Pancreas (tissue), 10 donors: ENCODE measurements at regions of chr15 and their contacts with region 1.

Region 1: DNA sequence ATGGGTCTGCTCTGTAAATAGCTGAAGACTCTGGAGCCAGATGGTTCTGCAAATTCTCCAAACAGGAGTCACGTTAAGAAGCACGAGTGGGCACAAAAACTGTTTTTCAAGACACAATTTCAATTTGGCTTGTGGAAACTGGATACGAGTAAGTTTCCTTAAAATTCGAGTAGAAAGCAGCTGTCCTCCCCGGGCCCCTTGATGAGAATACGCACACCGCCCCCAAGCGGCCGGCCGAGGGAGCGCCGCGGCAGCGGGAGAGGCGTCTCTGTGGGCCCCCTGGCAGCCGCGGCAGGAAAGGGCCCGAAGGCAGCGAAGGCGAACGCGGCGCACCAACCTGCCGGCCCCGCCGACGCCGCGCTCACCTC is 778 bp upstream of the THBS1 start:
- DNase-seq: peak; percentile 83 to 99 (median 92)
- ATAC-seq: peak; percentile 82 to 90 (median 86)
- H3K4me3 ChIP-seq: peak overlapping the region; percentile 26 to 66 (median 43)
- H3K27ac ChIP-seq: peak overlapping the region; percentile 64 to 88 (median 74)
- H3K4me1 ChIP-seq: no peaks in the 10 kb centered on the region
- H3K27me3 ChIP-seq: no peaks in the 10 kb centered on the region
- CTCF ChIP-seq: peak; percentile 96 to 99 (median 98)

Region 2: GRCh38 chr15:38828031-38828532 is 752.0 kb before region 1 on chr15:
- intact Hi-C with region 1: loop called in 1 of 3 experiments (anchors 10 kb)
- DNase-seq: no peak
- ATAC-seq: no peak
- H3K4me3 ChIP-seq: no peak overlapping the region
- H3K27ac ChIP-seq: no peak overlapping the region
- H3K4me1 ChIP-seq: no peaks in the 10 kb centered on the region
- H3K27me3 ChIP-seq: no peaks in the 10 kb centered on the region
- CTCF ChIP-seq: no peak

Region 3: GRCh38 chr15:39171944-39172368 is 408.1 kb before region 1 on chr15:
- intact Hi-C with region 1: loop called in 1 of 3 experiments (anchors 5 kb)
- DNase-seq: peak in 5 of 6 donors; percentile 31 to 63 (median 55)
- ATAC-seq: peak; percentile 83 to 97 (median 94)
- H3K4me3 ChIP-seq: no peak overlapping the region
- H3K27ac ChIP-seq: peak overlapping the region in 1 of 4 donors; percentile 7
- H3K4me1 ChIP-seq: peaks cover 0 to 6% (median 0%) of the 10 kb centered on the region in 3 donors
- H3K27me3 ChIP-seq: no peaks in the 10 kb centered on the region
- CTCF ChIP-seq: peak in 2 of 4 donors; percentile 9 to 10

Region 4: GRCh38 chr15:39358441-39359041 is 221.6 kb before region 1 on chr15:
- intact Hi-C with region 1: no loop called
- DNase-seq: peak in 4 of 6 donors; percentile 27 to 46 (median 38)
- ATAC-seq: peak; percentile 87 to 94 (median 92)
- H3K4me3 ChIP-seq: no peak overlapping the region
- H3K27ac ChIP-seq: peak overlapping the region; percentile 29 to 73 (median 56)
- H3K4me1 ChIP-seq: peaks cover 21 to 27% (median 25%) of the 10 kb centered on the region in 3 donors
- H3K27me3 ChIP-seq: no peaks in the 10 kb centered on the region
- CTCF ChIP-seq: no peak